ENCODE measurements at regions of chr7 and their contacts with region 1.

Region 1: DNA sequence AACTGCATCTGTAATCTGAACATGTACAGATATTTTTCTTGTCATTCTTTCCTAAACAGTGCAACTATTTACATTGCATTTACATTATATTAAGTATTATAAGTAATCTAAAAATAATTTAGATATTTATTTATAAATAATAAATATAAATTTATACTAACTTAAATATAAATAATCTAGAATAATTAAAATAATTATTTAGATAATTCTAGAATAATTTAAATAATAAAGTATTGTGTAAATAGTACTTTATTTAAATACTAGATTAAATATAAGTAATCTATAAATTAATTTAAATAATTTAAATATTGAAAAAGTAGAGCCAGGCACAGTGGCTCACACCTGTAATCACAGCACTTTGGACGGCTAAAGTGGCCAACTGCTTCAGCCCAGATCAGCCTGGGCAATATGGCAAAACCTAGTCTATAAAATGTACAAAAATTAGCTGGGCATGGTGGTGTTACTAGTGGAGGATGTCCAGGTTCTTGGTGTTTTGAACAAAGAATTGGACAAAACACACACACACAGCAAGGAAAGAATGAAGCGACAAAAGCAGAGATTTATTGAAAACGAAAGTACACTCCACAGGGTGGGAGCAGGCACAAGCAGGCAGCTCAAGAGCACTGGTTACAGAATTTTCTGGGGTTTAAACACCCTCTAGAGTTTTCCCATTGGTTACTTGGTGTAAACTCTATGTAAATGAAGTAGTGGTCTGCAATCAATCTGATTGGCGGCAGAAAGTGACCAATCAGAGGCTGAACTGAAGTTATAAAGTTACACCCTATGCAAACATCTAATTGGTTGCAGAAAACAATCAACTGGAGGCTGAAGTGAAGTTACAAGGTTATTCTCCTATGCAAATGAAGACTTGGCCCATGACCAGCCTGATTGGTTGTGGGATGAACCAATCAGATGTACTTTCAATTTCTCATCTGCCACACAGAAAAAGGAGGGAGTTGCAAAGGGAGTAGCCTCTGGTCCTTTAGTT is 100.2 kb upstream of the SP4 start:
- DNase-seq: no peak
- ATAC-seq: no peak

Region 2: GRCh38 chr7:21352540-21353387 is 25.0 kb after region 1 on chr7:
- intact Hi-C with region 1: loop called (anchors 1 kb)
- DNase-seq: no peak
- ATAC-seq: no peak

Region 3: DNA sequence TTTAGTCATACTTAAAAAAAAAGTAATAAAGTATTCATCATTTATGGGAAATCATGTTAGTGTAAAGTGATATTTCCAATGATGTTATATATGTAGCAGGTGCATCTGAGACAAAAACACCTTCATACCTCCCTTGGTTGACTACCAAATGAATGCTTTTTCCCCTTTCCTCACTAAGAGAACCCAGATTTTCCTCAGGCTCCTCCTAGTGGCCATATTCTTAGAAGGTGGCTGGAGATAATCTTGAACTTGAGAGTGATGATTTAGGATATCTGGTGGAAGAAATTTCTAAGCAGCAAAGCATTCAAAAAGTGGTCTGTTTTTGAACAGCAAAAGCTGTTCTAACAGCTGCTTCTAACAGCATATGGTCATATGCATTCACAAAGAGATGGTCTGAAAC is 198.3 kb after region 1 on chr7:
- intact Hi-C with region 1: no loop called
- DNase-seq: no peak
- ATAC-seq: no peak